ENCODE measurements at regions of chr11 and their contacts with region 1.

Region 1: GRCh38 chr11:34512840-34513681 is 533 bp downstream of the ELF5 start:
- DNase-seq: peak; percentile 57
- H3K4me3 ChIP-seq: no peak overlapping the region
- H3K27ac ChIP-seq: no peak overlapping the region
- H3K4me1 ChIP-seq: no peaks in the 10 kb centered on the region
- H3K27me3 ChIP-seq: no peaks in the 10 kb centered on the region
- CTCF ChIP-seq: peak; percentile 76

Region 2: DNA sequence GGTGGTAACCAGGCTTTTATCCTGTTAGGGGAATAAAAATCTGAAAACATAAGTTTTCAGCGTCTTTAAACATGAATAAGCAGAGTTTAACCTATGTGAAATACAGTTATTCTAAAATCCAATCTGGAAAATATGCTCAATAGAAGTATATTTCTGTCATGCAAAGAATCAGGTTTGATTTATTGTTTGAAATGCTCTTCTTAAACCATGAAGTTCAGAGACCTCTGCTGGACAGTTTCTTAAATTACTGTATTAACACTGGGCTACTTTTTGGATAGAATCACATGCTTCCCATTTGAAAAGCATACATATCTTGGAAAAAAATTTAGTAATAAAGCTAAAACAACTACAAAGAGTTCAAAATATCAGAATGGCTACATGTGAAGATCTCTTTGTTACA is 377.8 kb after region 1 on chr11:
- intact Hi-C with region 1: loop called (anchors 5 kb)
- DNase-seq: no peak
- H3K4me3 ChIP-seq: no peak overlapping the region
- H3K27ac ChIP-seq: no peak overlapping the region
- H3K4me1 ChIP-seq: no peaks in the 10 kb centered on the region
- H3K27me3 ChIP-seq: no peaks in the 10 kb centered on the region
- CTCF ChIP-seq: peak; percentile 37